H1 (cell line): ENCODE measurements at regions of chr3 and their contacts with region 1.

Region 1: DNA sequence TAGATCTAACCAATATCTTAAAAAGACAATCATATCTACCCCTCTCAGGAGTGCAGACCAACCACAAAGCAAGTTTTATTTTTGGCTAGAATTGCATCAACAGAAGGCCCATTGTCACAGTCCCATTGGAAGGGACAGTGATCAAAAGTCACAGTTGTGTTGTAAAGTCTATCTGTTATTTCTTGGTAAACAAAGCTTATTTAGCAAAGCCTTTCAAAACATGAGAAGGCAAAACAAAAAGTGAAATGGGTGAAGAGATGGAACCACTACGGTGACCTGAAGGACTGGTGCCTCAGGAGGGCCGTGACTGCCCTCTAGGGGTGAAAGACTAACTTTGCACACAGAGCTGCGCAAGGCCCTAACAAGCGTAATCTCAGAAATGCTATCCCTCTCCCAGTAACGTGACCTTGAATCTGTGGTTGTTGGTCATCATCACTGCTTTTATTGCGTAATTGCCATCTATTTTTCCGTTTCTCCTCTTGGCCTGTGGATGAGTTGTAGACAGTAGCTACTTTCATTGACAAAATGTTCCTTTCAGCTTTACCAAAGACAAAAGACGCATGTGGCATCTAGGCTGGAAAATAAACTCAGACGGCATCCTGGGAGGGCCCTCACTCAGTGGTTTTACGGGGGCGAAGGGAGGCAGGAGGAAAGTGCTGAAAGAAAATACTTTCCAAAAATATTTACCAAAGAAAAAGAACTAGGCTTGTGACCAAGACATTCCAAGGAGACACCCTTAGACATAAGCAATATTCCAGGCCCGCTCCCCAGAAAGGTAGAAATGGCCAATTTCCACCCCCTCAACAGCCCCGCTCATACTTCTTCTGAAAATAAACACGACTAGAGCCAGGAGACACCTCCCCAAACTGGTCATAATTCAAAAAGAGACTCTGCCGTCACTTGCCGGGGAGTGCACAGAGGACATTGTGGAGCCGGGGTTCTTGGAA is 79.4 kb downstream of the FRMD4B start:
- DNase-seq: peak in 1 of 2 experiments; percentile 63
- H3K4me3 ChIP-seq: no peak overlapping the region
- H3K27ac ChIP-seq: no peak overlapping the region
- H3K4me1 ChIP-seq: no peaks in the 10 kb centered on the region
- H3K27me3 ChIP-seq: no peaks in the 10 kb centered on the region
- CTCF ChIP-seq: peak; percentile 86 to 98 (median 91)
- EP300 ChIP-seq: no peak
- POLR2A ChIP-seq: no peak
- RAD21 ChIP-seq: peak; percentile 98 to 99

Region 2: DNA sequence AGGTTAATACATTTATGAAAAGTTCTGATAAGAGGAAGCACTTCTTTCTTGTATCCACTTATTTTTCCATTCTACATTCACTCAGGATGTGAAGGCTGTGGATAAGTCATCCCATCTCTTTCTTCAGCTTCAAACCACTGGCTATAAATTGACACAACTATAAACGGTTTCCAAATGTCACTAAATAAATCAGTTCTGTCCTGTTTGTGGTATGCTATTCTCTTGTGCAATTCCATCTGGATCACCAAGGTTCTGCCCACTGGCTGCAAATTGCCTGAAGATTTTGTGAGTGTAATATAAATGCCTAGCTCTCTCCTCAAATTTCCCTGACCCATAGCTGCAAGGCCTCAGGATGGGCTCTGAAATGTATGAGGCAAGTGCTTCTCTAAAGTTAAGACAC is 177.0 kb before region 1 on chr3:
- CTCF ChIA-PET with region 1: interaction called, 11 read pairs
- POLR2A ChIA-PET with region 1: no interaction called
- DNase-seq: no peak
- H3K4me3 ChIP-seq: no peak overlapping the region
- H3K27ac ChIP-seq: no peak overlapping the region
- H3K4me1 ChIP-seq: no peaks in the 10 kb centered on the region
- H3K27me3 ChIP-seq: no peaks in the 10 kb centered on the region
- CTCF ChIP-seq: no peak
- EP300 ChIP-seq: no peak
- POLR2A ChIP-seq: no peak
- RAD21 ChIP-seq: no peak

Region 3: DNA sequence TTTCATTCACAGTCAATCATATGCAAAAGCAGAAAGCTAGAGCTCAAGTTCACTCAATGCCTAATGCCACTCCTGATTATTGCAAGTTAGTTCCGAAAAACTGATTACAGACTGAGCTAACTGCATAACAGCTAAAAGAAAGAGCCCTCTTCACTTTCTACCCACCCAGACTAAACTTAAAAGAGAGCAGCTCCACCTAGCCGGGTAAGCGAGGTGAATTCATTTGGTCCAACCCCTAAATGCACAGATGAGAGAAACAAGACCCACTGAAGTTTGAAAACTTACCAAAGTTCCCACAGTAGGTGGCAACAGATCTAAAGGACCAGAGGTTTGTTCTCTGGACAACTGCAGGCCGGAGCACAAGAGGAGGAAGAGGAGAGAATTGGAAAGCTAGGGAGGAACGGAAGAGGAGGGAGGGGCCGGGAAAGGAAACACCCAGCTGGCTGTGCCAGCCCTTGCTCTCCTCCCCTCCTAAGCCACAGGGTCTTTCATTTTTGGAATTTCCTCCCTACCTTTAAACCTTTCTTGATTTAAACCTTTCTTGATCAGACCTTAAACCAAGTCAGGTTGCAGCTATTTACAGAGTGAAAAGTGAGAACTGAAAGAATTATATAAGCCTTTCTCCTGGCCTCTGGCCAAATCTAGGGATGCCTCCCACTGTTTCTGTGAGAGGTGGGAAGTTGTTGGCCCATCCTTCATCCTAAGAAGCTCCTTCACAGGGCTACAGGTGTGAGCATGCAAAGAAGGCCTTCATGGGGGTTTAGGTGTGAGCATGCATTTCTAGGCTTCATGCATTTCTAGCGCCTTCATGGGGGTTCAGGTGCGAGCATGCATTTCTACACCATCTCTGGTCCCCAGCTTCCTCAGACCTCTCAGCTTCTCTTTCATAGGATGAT is 69.5 kb before region 1 on chr3:
- CTCF ChIA-PET with region 1: interaction called, 11 read pairs
- POLR2A ChIA-PET with region 1: no interaction called
- DNase-seq: no peak
- H3K4me3 ChIP-seq: no peak overlapping the region
- H3K27ac ChIP-seq: no peak overlapping the region
- H3K4me1 ChIP-seq: peaks cover 0 to 16% (median 10%) of the 10 kb centered on the region in 4 experiments; a peak in 5 of 7 replicates
- H3K27me3 ChIP-seq: no peaks in the 10 kb centered on the region
- CTCF ChIP-seq: no peak
- EP300 ChIP-seq: peak in 1 of 2 experiments; percentile 99; a peak in 1 of 3 replicates
- POLR2A ChIP-seq: no peak
- RAD21 ChIP-seq: no peak

Region 4: GRCh38 chr3:69294014-69294775 is 12.3 kb before region 1 on chr3:
- CTCF ChIA-PET with region 1: interaction called, 44 read pairs
- POLR2A ChIA-PET with region 1: no interaction called
- DNase-seq: no peak
- H3K4me3 ChIP-seq: no peak overlapping the region
- H3K27ac ChIP-seq: no peak overlapping the region
- H3K4me1 ChIP-seq: peaks cover 5 to 19% (median 8%) of the 10 kb centered on the region in 4 experiments; a peak in 4 of 7 replicates
- H3K27me3 ChIP-seq: peaks cover 0 to 4% (median 0%) of the 10 kb centered on the region in 4 experiments; a peak in 3 of 7 replicates
- CTCF ChIP-seq: no peak
- EP300 ChIP-seq: no peak
- POLR2A ChIP-seq: no peak
- RAD21 ChIP-seq: no peak

Region 5: DNA sequence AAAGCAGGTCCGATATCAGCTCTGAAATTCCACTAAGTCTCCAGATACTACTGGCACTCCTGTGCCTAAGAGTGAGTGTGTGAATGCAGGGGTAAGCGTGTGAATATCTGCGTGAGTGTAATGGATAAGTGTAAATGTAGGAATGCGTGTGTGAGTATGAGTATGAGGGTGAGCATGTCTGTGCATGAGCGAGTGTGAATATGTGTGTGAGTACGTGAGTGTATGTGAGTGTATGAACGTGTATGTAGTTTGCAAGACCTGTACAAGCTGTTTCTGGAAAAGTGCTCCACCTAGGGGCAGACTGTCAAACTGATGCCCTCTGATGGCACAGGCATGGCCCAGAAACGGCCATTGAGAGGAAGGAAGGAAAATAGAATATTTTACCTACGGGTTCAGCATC is 103.7 kb after region 1 on chr3:
- CTCF ChIA-PET with region 1: interaction called, 24 read pairs
- POLR2A ChIA-PET with region 1: no interaction called
- DNase-seq: peak in 1 of 2 experiments; percentile 76
- H3K4me3 ChIP-seq: no peak overlapping the region
- H3K27ac ChIP-seq: no peak overlapping the region
- H3K4me1 ChIP-seq: peaks cover 0 to 2% (median 0%) of the 10 kb centered on the region in 4 experiments; a peak in 2 of 7 replicates
- H3K27me3 ChIP-seq: no peaks in the 10 kb centered on the region
- CTCF ChIP-seq: peak; percentile 68 to 89 (median 72)
- EP300 ChIP-seq: no peak
- POLR2A ChIP-seq: no peak
- RAD21 ChIP-seq: peak; percentile 60 to 67

Region 6: GRCh38 chr3:69524816-69525215 is 218.3 kb after region 1 on chr3:
- CTCF ChIA-PET with region 1: no interaction called
- POLR2A ChIA-PET with region 1: no interaction called
- DNase-seq: no peak
- H3K4me3 ChIP-seq: no peak overlapping the region
- H3K27ac ChIP-seq: no peak overlapping the region
- H3K4me1 ChIP-seq: no peaks in the 10 kb centered on the region
- H3K27me3 ChIP-seq: no peaks in the 10 kb centered on the region
- CTCF ChIP-seq: no peak
- EP300 ChIP-seq: no peak
- POLR2A ChIP-seq: no peak
- RAD21 ChIP-seq: no peak

Region 7: GRCh38 chr3:69671082-69671952 is 364.8 kb after region 1 on chr3:
- CTCF ChIA-PET with region 1: interaction called, 21 read pairs
- POLR2A ChIA-PET with region 1: no interaction called
- DNase-seq: no peak
- H3K4me3 ChIP-seq: no peak overlapping the region
- H3K27ac ChIP-seq: no peak overlapping the region
- H3K4me1 ChIP-seq: no peaks in the 10 kb centered on the region
- H3K27me3 ChIP-seq: no peaks in the 10 kb centered on the region
- CTCF ChIP-seq: peak in 2 of 3 experiments; percentile 52 to 58; a peak in 2 of 4 replicates
- EP300 ChIP-seq: no peak
- POLR2A ChIP-seq: no peak
- RAD21 ChIP-seq: peak; percentile 85 to 87